AG04450 (cell line): ENCODE measurements at regions of chr9 and their contacts with region 1.

Region 1: DNA sequence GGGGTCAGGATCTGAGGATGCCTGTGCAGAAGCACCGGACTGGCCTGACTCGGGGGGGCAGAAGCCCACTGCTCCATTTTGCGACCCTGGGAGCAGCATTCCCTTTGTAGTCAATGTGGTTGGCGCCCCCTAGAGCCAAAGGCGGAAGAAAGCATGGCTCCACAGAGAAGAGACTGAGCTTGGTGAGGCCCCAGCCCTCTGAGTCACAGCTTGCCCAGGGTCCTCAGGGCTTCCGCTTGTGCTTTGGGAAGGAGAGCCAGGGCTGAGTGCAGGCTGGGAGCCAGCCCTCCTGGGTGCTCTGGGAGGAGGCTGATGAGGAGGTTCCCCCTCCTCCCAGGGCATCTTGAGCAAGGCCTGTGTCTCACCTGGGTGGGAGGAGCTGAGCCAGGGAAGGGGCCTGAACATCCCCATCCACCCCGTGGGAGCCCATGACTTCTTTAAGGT is 5.5 kb upstream of the AQP3 start:
- DNase-seq: peak; percentile 46
- H3K4me3 ChIP-seq: no peak overlapping the region
- H3K27ac ChIP-seq: no peak overlapping the region
- H3K27me3 ChIP-seq: no peaks in the 10 kb centered on the region
- CTCF ChIP-seq: peak; percentile 89

Region 2: GRCh38 chr9:33297432-33297831 is 155.4 kb before region 1 on chr9:
- CTCF ChIA-PET with region 1: interaction called, 10 read pairs
- POLR2A ChIA-PET with region 1: no interaction called
- DNase-seq: no peak
- H3K4me3 ChIP-seq: no peak overlapping the region
- H3K27ac ChIP-seq: no peak overlapping the region
- H3K27me3 ChIP-seq: no peaks in the 10 kb centered on the region
- CTCF ChIP-seq: no peak

Region 3: DNA sequence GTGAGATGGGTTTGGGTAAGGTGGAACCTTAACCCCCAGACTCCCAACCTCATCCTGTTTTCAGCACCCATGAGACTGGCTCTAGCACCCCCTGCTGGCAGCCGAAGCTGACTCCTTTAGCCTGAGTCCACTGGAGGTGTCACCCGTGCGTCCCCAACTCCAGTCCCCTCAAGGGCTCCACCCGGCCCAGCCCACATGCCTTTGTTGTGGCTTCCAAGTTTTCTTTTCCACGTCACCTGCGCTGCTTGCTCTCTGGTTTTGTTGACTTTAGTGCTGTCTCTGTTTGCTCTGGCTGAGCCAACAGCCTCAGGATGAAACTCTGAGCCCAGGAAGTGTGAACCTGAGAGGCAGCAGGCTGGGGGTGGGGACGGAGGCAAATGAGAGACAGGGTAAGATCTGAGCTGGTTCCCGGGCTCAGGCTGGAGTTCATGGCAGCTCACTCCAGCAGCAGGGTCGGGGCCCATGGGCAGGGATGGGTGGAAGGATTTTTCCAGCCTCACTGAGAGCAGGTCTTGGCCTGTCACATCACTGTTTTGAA is 37.3 kb before region 1 on chr9:
- CTCF ChIA-PET with region 1: interaction called, 10 read pairs
- POLR2A ChIA-PET with region 1: no interaction called
- DNase-seq: no peak
- H3K4me3 ChIP-seq: no peak overlapping the region
- H3K27ac ChIP-seq: no peak overlapping the region
- H3K27me3 ChIP-seq: peaks cover 18% of the 10 kb centered on the region
- CTCF ChIP-seq: peak; percentile 74

Region 4: GRCh38 chr9:33436440-33436839 is 16.4 kb before region 1 on chr9:
- CTCF ChIA-PET with region 1: interaction called, 48 read pairs
- POLR2A ChIA-PET with region 1: no interaction called
- DNase-seq: no peak
- H3K4me3 ChIP-seq: no peak overlapping the region
- H3K27ac ChIP-seq: no peak overlapping the region
- H3K27me3 ChIP-seq: peaks cover 19% of the 10 kb centered on the region
- CTCF ChIP-seq: no peak

Region 5: DNA sequence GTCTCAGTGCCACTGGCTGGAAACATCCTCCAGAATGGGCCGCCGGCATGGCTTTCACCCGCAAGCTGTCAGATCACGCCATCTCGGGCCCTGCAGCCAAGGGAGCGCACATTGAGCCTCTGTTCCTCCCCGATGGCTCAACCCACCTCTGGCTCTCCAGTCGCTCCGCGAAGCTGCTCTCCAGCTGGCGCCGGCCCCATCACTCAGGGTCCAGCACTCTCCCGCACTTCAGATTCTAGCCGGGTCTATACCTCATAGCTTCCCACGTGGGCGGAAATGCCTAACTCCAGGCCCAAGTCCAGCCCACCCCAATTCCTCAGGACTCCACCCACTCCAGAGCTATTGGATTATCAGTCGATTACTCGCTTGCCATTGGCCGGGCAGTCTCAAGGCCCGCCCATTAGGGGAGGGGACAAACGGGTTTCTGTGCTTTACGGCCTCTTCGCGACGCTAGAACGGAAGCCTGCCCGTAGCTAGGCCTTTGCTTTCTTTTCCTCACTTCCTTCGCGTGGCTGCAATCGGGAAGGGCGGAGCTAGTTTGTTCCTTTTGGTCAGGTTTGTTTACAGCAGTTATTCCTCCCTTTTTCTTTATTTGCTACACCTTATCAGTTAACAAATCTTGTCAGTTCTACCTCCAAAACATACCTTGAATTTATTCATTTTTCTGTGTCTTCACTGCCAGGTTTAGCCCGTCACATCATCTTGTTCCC is 20.9 kb after region 1 on chr9 and contains the start of gene NOL6:
- CTCF ChIA-PET with region 1: interaction called, 47 read pairs
- POLR2A ChIA-PET with region 1: interaction called, 3 read pairs
- DNase-seq: peak; percentile 98
- H3K4me3 ChIP-seq: peak within 1 kb of the TSS; percentile 99
- H3K27ac ChIP-seq: peak within 1 kb of the TSS; percentile 52
- H3K27me3 ChIP-seq: no peaks in the 10 kb centered on the region
- CTCF ChIP-seq: no peak
- polyA plus RNA-seq, gene NOL6: 34.7 and 42.6 TPM in 2 replicates

Region 6: GRCh38 chr9:33628865-33629410 is 176.1 kb after region 1 on chr9:
- CTCF ChIA-PET with region 1: no interaction called
- POLR2A ChIA-PET with region 1: no interaction called
- DNase-seq: no peak
- H3K4me3 ChIP-seq: no peak overlapping the region
- H3K27ac ChIP-seq: no peak overlapping the region
- H3K27me3 ChIP-seq: peaks cover 30% of the 10 kb centered on the region
- CTCF ChIP-seq: no peak